ENCODE measurements at regions of chr3 and their contacts with region 1.

Region 1: DNA sequence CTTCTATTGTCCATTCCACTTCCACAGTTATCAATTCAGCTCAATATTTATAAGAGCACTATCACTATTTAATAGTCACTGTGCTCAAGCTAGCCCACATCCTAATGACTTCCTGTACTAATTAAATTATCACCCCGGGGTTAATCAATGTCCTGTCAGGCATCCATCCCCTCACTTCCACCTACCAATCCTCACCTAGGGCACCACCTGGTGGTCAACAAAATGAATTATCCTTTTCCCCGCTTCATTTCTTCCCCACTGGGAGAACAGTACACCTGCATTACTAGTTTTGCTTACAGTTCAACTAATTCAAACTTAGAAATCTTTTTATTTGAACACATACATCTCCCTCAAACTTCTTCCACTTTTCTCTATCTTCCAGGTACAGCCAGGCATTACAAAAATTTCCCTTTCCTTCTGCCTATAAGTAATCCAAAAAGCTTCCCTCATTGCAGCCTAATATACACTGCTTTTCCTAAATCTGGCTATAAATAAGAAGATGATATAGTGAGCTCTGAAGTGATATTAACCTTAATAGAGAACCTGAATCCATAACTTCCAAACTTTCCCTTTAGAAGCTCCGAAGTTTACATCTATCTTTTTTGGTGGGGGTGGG is 68.5 kb downstream of the TMCC1 start:
- DNase-seq: no peak
- ATAC-seq: peak; percentile 42

Region 2: DNA sequence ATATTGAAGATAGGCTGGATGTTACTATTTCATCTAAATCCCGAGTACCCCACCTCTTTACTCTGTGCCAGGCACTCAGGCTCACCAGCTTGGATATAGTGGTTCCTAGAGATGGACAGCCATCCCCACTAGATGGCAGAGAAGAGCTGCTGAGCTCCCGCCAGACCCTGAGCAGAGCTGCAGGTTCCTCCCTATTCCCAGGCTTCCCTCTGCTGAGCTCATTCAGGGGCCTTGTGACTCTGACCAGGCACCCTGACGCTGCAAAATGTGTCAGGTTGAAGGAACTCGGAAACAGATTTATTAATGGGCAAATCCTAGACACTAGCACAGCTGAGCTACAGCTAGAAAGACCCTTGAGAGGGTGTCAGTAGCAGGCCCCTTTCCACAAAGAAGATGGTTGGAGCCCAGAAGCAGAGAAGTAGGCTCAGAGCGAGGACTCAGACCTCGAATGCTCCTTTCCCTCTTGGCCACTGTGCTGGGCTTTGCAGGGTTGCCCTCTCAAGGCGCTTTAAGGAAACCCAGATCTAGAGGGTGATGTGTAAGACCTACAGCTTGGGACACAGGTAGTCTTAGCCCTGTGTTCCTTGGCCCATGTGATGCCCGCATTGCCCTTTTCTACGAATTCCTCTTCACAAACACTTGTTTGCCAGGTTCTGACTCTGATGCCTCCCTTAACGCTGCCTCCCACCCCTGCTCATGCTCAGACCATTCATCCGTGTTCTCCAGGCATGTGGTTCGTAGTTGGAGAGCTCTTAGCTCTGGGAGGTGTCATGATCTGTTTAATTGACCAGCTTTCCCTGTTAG is 334.6 kb before region 1 on chr3:
- intact Hi-C with region 1: loop called (anchors 10 kb)
- DNase-seq: peak; percentile 89
- ATAC-seq: peak; percentile 91

Region 3: GRCh38 chr3:129645290-129645689 is 179.7 kb before region 1 on chr3:
- intact Hi-C with region 1: loop called (anchors 5 kb)
- DNase-seq: no peak
- ATAC-seq: no peak

Region 4: GRCh38 chr3:131750256-131750655 is 1925.2 kb after region 1 on chr3:
- intact Hi-C with region 1: no loop called
- DNase-seq: no peak
- ATAC-seq: no peak